ENCODE measurements at regions of chr7 and their contacts with region 1.

Region 1: GRCh38 chr7:91880413-91881241 is at the start of gene MTERF1:
- DNase-seq: peak; percentile 95
- H3K4me3 Mint-ChIP-seq: peak within 1 kb of the TSS; percentile 96
- H3K27ac Mint-ChIP-seq: peak within 1 kb of the TSS; percentile 83
- H3K4me1 Mint-ChIP-seq: peaks cover 27% of the 10 kb centered on the region
- H3K27me3 Mint-ChIP-seq: no peaks in the 10 kb centered on the region
- total RNA-seq, gene MTERF1: 14.1 to 14.2 TPM

Region 2: DNA sequence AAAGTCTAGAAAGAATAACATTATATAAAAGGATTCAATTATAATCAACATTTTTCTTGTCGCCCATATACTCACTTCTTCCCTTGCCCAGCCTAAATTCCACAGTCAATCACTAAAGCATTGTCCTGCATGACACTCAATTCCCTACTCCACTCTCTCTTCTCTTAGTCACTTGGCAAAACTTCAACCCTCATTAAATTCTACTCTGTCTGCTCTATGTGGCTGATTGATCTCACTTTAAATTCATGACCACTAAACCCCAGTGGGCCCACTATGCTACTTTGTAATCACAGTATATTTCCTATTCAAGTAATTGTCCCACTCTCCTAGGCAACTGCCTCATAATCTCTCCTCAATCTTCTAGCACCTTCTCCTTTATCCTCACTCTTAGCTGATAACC is 54.2 kb before region 1 on chr7:
- CTCF ChIA-PET with region 1: interaction called, 25 read pairs
- POLR2A ChIA-PET with region 1: no interaction called
- intact Hi-C with region 1: loop called (anchors 1 kb)
- DNase-seq: no peak
- H3K4me3 Mint-ChIP-seq: no peak overlapping the region
- H3K27ac Mint-ChIP-seq: no peak overlapping the region
- H3K4me1 Mint-ChIP-seq: no peaks in the 10 kb centered on the region
- H3K27me3 Mint-ChIP-seq: no peaks in the 10 kb centered on the region

Region 3: DNA sequence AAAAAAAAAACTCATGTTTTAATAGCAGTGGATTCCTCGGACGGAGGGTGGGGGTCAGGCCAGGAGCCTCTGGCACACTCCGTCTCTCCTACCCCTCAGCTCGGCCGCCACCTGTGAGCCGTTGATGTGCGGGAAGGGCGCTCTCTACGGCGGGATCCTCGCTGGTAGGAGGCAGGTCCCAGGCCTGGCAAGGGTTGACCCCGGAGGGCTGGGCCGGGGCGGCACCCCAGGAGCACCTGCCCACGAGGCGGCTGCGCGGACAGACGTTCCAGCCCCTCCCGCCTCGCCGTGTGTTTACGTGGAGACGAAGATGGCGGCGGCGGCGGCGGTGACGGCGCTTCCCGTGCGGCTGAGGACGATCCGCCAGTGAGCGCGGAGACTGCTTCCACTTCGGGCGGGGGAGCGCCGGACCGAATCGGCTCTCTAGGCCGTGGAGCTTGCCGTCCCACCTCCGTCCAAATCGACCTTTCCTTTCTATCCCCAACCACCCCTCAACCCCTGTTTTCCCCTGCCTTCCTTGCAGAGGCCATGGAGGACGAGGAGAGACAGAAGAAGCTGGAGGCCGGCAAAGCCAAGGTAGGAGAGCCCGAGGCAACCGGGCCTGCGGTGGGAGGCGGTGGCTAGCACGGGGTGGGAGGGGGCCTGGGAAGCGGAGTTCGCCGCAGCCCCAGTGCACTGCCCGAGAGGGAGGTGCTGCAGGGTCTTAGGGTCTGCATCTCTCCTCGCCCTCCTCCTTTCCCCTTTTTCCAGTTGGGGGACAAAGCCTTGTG is 60.1 kb after region 1 on chr7 and contains the start of gene AKAP9:
- CTCF ChIA-PET with region 1: interaction called, 11 read pairs
- POLR2A ChIA-PET with region 1: interaction called, 3 read pairs
- intact Hi-C with region 1: loop called (anchors 1 kb)
- DNase-seq: peak; percentile 93
- H3K4me3 Mint-ChIP-seq: peak within 1 kb of the TSS; percentile 92
- H3K27ac Mint-ChIP-seq: peak within 1 kb of the TSS; percentile 86
- H3K4me1 Mint-ChIP-seq: peaks cover 35% of the 10 kb centered on the region
- H3K27me3 Mint-ChIP-seq: peaks cover 1% of the 10 kb centered on the region
- total RNA-seq, gene AKAP9: 23.5 to 25.3 TPM

Region 4: GRCh38 chr7:91993976-91994375 is 113.3 kb after region 1 on chr7:
- CTCF ChIA-PET with region 1: no interaction called
- POLR2A ChIA-PET with region 1: no interaction called
- intact Hi-C with region 1: no loop called
- DNase-seq: no peak
- H3K4me3 Mint-ChIP-seq: no peak overlapping the region
- H3K27ac Mint-ChIP-seq: no peak overlapping the region
- H3K4me1 Mint-ChIP-seq: no peaks in the 10 kb centered on the region
- H3K27me3 Mint-ChIP-seq: no peaks in the 10 kb centered on the region

Region 5: DNA sequence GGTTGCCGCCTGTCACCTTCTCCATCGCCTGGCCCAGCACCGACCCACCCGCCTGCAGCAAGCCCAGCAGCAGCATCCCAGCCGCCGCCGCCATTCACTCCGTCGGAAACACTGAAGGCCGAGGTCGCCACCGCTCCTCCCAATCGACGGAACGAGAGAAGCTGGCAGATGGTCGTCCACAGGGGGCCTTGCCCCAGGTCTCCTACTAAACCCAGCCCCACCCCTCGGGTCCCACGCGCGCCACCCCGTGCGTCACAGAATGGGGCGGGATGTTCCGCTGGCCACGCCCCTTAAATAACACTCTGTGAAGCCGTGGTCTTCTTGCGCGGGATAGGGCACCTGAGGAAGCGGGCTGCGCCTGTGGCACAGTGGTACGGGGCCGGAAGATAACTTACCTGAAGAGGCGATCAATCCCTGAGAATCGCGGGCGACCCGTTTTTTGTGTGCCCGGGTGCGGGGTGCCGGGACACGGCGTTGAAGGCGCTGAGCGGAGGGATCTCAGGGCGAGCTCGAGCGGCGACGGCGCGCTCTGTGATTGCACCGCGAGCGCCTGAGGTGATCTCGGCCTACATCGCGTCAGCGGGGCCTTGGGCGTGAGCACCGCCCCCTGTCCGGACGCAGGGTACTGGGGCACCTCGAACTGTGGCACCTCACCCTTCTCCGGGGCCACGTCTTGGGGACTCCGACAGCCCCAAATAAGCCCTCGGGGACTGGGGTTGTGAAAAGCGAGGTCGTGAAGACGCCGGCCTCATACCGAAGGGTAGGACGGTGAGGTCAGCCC is 253.8 kb after region 1 on chr7 and contains the start of gene CYP51A1:
- CTCF ChIA-PET with region 1: no interaction called
- POLR2A ChIA-PET with region 1: no interaction called
- intact Hi-C with region 1: loop called (anchors 2 kb)
- DNase-seq: peak; percentile 95
- H3K4me3 Mint-ChIP-seq: peak within 1 kb of the TSS; percentile 99
- H3K27ac Mint-ChIP-seq: peak within 1 kb of the TSS; percentile 100
- H3K4me1 Mint-ChIP-seq: peaks cover 30% of the 10 kb centered on the region
- H3K27me3 Mint-ChIP-seq: peaks cover 2% of the 10 kb centered on the region
- total RNA-seq, gene CYP51A1: 72.3 to 74.7 TPM

Measured in activated CD4-positive, alpha-beta memory T cell treated with anti-CD3 and anti-CD28 coated beads for 36 hours (primary cell).